Activated T-helper 2 cell treated with anti-CD3 and anti-CD28 coated beads, Interferon-gamma antibody, Interleukin-2, Interleukin-4, amounts not matched to agents 10 μg/mL and 5 μg/mL and 100 μg/mL, durations not matched to agents 14 hours and 24 hours and 36 hours (primary cell): ENCODE measurements at regions of chr17 and their contacts with region 1.

Region 1: DNA sequence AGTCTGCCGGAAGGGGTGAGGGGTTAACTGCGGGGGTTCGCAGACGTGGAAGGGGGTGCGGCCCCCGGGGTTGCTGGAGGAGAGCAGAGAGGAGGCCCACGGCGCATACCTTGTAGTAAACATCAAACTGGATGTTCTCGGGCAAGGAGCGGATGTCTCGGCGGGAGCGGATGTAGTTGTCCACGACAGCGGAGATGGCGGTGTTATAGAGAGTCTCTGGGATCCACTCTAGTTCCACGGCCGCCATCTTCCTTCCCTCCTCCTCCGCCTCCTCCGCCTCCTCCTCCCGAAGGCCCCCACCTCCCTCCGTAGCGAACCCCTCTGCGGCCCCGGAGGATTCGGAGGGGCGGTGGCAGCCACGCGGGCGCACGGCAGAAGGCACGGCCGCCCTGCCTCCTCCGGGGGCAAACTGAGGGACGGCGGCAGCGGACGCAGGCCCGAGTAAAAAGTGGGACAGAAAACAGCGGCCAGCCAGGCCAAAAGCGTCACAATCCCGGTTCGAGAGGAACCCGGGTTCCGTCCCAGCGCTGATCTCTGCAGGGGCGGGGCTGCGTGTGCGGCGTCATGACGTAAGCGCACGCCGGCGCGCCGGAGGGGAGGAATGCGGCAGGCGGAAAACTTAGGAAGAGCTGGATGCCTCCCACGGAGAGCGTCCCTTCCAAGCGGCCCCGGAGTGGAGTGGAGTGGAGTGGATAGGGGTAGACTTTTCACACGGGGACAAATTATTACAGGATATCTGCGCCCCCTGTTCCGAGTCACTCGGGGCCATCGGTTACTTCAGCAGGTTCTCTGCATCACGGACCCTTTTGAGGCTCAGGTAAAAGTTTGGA is at the start of gene APPBP2:
- DNase-seq: peak; percentile 68
- H3K4me3 Mint-ChIP-seq: peak within 1 kb of the TSS; percentile 99
- H3K27ac Mint-ChIP-seq: peak within 1 kb of the TSS; percentile 92
- H3K4me1 Mint-ChIP-seq: peaks cover 29% of the 10 kb centered on the region
- H3K27me3 Mint-ChIP-seq: no peaks in the 10 kb centered on the region
- total RNA-seq, gene APPBP2: 23.2 and 26.9 TPM in 2 replicates

Region 2: GRCh38 chr17:60599620-60600489 is 74.0 kb after region 1 on chr17 and contains the start of gene PPM1D:
- intact Hi-C with region 1: loop called (anchors 2 kb)
- DNase-seq: peak; percentile 97
- H3K4me3 Mint-ChIP-seq: peak within 1 kb of the TSS; percentile 96
- H3K27ac Mint-ChIP-seq: peak within 1 kb of the TSS; percentile 94
- H3K4me1 Mint-ChIP-seq: peaks cover 31% of the 10 kb centered on the region
- H3K27me3 Mint-ChIP-seq: no peaks in the 10 kb centered on the region
- total RNA-seq, gene PPM1D: 14.9 and 15.1 TPM in 2 replicates

Region 3: DNA sequence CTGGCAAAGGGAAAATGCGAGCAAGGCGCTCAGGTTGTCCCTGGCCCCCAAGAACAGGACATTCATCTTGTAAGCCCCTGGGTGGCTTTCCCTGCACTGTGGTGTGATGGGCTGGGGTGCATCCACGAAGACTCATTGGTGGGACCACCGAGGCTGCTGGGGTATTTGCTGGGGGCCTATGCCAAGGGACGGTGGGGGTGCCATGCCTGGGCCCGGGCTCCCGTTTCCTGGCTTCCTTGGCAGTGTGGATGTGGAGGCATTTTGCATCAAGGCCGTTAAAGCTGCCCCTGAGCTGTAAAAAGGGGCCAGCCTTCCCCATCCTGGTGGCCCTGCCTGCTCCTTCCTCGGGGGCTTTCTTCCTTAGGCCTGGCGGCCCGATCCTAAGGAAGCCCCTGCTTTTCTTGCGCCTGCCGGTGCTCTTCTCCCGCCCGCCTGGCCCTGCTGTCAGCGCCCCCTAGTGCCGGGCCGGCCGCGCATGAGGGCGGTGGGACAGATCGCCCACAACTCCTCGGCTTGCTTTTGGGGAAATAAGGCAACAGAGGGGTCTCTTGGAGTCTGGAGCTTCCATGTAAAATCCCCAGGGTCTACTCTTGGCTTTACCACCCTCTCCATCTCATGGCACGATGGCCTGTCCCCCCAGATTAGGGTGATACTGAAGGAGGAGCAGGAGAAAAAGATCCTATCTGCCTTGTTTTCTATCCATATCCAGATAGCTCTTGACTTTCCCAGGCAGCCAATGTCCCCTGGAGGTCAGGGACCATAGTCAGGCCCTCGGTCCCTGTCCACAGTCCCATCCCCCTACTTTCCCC is 864.0 kb after region 1 on chr17:
- intact Hi-C with region 1: no loop called
- DNase-seq: no peak
- H3K4me3 Mint-ChIP-seq: no peak overlapping the region
- H3K27ac Mint-ChIP-seq: no peak overlapping the region
- H3K4me1 Mint-ChIP-seq: no peaks in the 10 kb centered on the region
- H3K27me3 Mint-ChIP-seq: peaks cover 15% of the 10 kb centered on the region